ENCODE measurements at regions of chr12 and their contacts with region 1.

Region 1: DNA sequence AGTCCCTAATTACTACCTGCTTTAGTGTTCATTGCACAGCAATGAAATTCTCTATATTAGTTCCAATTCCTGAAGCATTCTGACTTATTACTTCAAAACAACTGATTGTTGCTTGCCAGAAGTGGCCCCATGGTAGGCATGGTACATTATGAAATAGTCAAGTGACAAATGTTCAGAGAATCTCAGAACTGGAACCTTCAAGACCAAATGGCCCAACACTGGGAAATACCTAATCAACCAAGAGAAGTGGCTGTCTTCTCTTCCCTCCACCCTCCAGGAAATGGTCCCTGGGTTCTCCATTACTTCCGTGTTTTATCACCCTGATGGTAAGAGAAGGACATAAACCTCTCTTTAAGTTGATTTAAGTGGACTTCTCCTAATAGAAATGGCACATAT is 49.9 kb downstream of the ITPR2 start:
- DNase-seq: no peak
- ATAC-seq: no peak
- H3K4me3 ChIP-seq: no peak overlapping the region
- H3K27ac ChIP-seq: no peak overlapping the region
- H3K4me1 ChIP-seq: peaks cover 17% of the 10 kb centered on the region
- H3K27me3 ChIP-seq: no peaks in the 10 kb centered on the region
- CTCF ChIP-seq: no peak

Region 2: DNA sequence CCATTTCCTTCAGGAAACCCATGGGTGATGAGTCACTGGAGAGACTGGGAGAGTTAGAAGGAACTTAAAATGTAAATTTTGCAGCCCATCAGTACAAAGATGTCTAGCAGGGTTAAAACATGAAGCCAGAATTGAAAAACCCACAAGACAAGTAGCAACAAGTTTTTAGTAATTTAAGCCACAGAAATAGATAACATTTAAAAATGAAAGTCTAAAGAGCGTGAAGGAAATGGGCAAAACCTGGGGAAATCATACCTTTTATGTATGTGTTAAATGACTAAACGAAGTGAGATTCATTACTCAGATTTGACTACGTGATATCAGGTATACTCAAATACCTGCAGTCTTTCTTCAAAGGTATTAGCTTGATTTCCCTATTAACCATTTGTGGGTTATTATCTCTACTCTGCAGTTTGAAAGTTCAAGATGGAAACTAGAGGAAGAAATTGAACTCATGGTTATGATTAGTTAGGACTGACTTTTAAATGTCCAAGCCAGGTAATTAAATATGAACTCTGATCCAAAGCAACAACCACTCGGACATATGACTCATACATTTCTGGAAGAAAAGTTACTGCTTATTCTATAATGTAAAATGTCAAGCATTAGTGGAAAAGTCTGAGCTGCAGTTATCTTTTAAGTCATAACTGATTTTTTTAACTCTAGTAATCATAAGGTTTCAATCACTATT is 34.2 kb before region 1 on chr12:
- CTCF ChIA-PET with region 1: no interaction called
- POLR2A ChIA-PET with region 1: no interaction called
- intact Hi-C with region 1: no loop called
- DNase-seq: peak; percentile 58
- ATAC-seq: peak; percentile 83
- H3K4me3 ChIP-seq: no peak overlapping the region
- H3K27ac ChIP-seq: no peak overlapping the region
- H3K4me1 ChIP-seq: peaks cover 24% of the 10 kb centered on the region
- H3K27me3 ChIP-seq: no peaks in the 10 kb centered on the region
- CTCF ChIP-seq: no peak

Region 3: DNA sequence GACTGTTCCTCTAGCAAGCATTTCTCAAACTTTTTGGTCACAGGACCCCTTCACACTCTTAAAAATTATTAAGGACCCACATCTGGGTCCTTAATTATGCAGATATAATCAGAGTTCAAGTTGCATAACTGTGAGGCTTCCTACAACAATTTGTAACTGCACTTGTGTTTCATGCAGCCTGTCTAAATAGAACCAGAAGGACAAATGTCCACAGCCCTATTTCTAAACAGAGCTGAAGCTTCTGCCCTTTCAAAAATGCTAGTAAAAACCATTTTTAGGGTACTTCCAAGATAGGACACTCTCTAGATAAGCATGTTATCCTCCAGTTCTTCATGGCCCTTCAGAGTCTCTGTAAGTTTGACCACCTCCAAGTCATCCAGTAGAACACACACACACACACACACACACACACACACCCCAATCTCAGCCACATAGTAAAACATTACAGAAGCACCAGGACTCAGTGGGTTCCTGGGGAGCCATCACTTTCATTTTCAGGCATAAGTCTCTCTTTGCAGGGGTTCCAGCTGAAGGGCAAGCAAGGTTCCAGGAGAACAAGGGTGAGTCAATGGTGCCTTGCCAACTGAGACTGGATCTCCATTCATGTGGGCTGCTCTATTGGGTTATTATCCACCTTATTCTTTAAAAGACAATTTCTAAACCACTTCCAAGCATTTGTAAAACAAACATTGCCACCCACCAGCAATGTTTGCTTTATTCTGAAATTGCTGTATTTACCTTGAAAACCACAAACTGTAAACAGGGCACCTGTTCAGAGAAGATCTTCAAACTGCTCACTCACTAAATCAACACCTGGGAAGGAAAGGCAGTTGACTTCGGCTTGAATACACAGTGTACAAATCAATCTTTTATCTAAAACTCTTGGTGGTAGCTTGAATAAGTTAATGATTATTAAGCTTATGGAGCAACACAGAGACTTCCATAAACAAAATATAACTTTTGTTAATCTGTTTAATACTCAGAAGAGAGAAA is 14.2 kb before region 1 on chr12:
- CTCF ChIA-PET with region 1: no interaction called
- POLR2A ChIA-PET with region 1: no interaction called
- intact Hi-C with region 1: loop called (anchors 2 kb)
- DNase-seq: peak; percentile 97
- ATAC-seq: peak; percentile 97
- H3K4me3 ChIP-seq: no peak overlapping the region
- H3K27ac ChIP-seq: no peak overlapping the region
- H3K4me1 ChIP-seq: peaks cover 16% of the 10 kb centered on the region
- H3K27me3 ChIP-seq: no peaks in the 10 kb centered on the region
- CTCF ChIP-seq: no peak

Region 4: DNA sequence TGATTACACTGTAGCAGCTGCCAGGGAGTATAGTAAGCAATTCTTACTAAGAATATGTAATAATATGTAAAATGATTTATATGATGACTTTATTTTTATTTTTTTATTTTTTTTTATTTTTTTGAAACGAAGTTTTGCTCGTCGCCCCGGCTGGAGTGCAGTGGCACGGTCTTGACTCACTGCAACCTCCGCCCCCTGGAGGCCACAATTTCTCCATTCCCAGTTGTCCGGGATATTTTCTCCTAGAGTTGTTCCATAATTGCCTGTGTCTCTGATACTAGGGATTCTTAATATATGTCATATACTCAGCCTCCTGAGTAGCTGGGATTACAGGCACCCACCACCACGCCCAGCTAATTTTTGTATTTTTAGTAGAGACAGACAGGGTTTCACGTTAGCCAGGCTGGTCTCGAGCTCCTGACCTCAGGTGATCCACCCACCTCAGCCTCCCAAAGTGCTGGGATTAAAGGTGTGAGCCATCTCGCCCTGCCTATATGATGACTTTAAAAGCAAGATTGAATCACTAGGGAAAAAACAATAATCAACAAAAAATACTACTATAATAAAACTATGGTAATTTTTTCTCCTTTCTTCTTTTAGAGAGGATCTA is 62.0 kb after region 1 on chr12:
- CTCF ChIA-PET with region 1: interaction called, 3 read pairs
- POLR2A ChIA-PET with region 1: no interaction called
- intact Hi-C with region 1: loop called (anchors 2 kb)
- DNase-seq: peak; percentile 78
- ATAC-seq: peak; percentile 95
- H3K4me3 ChIP-seq: no peak overlapping the region
- H3K27ac ChIP-seq: no peak overlapping the region
- H3K4me1 ChIP-seq: no peaks in the 10 kb centered on the region
- H3K27me3 ChIP-seq: no peaks in the 10 kb centered on the region
- CTCF ChIP-seq: peak; percentile 70